ENCODE measurements at regions of chr5 and their contacts with region 1.

Region 1: DNA sequence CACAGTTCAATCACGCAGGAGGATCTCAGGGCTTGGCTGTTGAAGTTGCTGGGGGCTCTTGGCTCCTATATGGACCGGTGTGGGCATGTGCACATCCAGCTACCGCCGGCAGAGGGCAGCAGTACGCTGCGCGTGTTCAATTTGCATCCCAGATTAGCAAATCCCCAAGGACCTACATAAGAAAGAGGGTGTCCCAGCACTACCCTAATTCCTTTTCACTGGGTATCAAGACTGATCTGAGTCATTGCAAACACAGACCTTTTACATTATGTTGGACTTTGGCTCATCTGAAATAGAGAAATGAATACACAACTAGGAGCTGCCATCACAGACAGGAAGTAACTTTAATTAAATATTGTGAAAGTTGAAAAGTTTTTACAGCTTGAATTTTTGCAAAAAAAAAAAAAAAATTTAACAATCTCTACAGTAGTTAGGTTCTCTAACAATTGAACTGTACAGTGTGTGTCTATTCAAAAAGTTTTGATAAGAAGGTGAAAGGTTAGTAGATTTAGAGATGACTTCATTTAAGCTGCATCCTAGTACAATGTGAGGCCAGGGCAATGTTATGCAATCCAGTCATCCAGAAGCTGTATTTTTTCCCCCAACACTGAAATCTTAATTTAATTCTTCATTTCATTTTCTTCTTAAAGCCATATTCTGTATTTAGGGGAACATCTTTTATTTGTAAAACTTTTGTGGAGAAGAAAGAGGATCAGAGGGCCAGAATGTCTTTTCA is 404.0 kb downstream of the EBF1 start:
- DNase-seq: peak; percentile 51 to 66 (median 55)
- H3K4me3 ChIP-seq: no peak overlapping the region
- H3K4me3 Mint-ChIP-seq: peak overlapping the region in 3 of 8 donors; percentile 1 to 20 (median 6)
- H3K27ac ChIP-seq: no peak overlapping the region
- H3K27ac Mint-ChIP-seq: no peak overlapping the region
- H3K4me1 ChIP-seq: no peaks in the 10 kb centered on the region
- H3K4me1 Mint-ChIP-seq: peaks cover 3 to 5% (median 4%) of the 10 kb centered on the region in 4 donors
- H3K27me3 ChIP-seq: no peaks in the 10 kb centered on the region
- H3K27me3 Mint-ChIP-seq: peaks cover 8 to 11% of the 10 kb centered on the region in 2 donors

Region 2: GRCh38 chr5:158174918-158175851 is 520.6 kb before region 1 on chr5:
- CTCF ChIA-PET with region 1: interaction called, 4 read pairs
- POLR2A ChIA-PET with region 1: no interaction called
- intact Hi-C with region 1: loop called (anchors 1 kb)
- DNase-seq: peak in 4 of 5 donors; percentile 13 to 22 (median 18)
- H3K4me3 ChIP-seq: no peak overlapping the region
- H3K4me3 Mint-ChIP-seq: no peak overlapping the region
- H3K27ac ChIP-seq: no peak overlapping the region
- H3K27ac Mint-ChIP-seq: no peak overlapping the region
- H3K4me1 ChIP-seq: no peaks in the 10 kb centered on the region
- H3K4me1 Mint-ChIP-seq: no peaks in the 10 kb centered on the region
- H3K27me3 ChIP-seq: no peaks in the 10 kb centered on the region
- H3K27me3 Mint-ChIP-seq: peaks cover 7 to 12% of the 10 kb centered on the region in 2 donors

Region 3: GRCh38 chr5:158660726-158661125 is 35.0 kb before region 1 on chr5:
- CTCF ChIA-PET with region 1: no interaction called
- POLR2A ChIA-PET with region 1: no interaction called
- intact Hi-C with region 1: no loop called
- DNase-seq: no peak
- H3K4me3 ChIP-seq: no peak overlapping the region
- H3K4me3 Mint-ChIP-seq: no peak overlapping the region
- H3K27ac ChIP-seq: no peak overlapping the region
- H3K27ac Mint-ChIP-seq: no peak overlapping the region
- H3K4me1 ChIP-seq: no peaks in the 10 kb centered on the region
- H3K4me1 Mint-ChIP-seq: no peaks in the 10 kb centered on the region
- H3K27me3 ChIP-seq: no peaks in the 10 kb centered on the region
- H3K27me3 Mint-ChIP-seq: peaks cover 7 to 14% of the 10 kb centered on the region in 2 donors

Region 4: DNA sequence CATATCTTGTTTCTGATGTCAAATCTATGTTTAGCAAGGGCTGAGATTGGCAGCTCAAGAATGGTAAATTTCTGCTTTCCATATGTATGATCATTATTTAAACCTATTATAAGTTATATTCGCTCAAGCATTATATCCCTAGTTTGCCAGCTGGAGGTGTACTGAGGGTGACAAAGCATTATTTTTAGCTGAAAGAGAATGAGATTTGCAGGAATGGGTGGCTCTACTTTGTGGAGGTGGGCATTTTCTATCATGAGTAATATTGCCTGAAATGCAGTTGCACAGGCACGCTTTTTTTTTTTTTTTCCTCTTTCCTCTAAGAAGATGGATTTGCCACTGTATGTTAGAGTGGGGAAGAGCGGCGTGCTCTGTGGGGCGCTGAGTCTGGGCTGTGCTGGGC is 10.1 kb after region 1 on chr5:
- CTCF ChIA-PET with region 1: interaction called, 11 read pairs
- POLR2A ChIA-PET with region 1: no interaction called
- intact Hi-C with region 1: no loop called
- DNase-seq: no peak
- H3K4me3 ChIP-seq: no peak overlapping the region
- H3K4me3 Mint-ChIP-seq: no peak overlapping the region
- H3K27ac ChIP-seq: no peak overlapping the region
- H3K27ac Mint-ChIP-seq: no peak overlapping the region
- H3K4me1 ChIP-seq: no peaks in the 10 kb centered on the region
- H3K4me1 Mint-ChIP-seq: no peaks in the 10 kb centered on the region
- H3K27me3 ChIP-seq: no peaks in the 10 kb centered on the region
- H3K27me3 Mint-ChIP-seq: peaks cover 0 to 3% of the 10 kb centered on the region in 2 donors

Region 5: GRCh38 chr5:158898185-158899177 is 202.7 kb after region 1 on chr5:
- CTCF ChIA-PET with region 1: no interaction called
- POLR2A ChIA-PET with region 1: no interaction called
- intact Hi-C with region 1: no loop called
- DNase-seq: no peak
- H3K4me3 ChIP-seq: no peak overlapping the region
- H3K4me3 Mint-ChIP-seq: no peak overlapping the region
- H3K27ac ChIP-seq: no peak overlapping the region
- H3K27ac Mint-ChIP-seq: no peak overlapping the region
- H3K4me1 ChIP-seq: no peaks in the 10 kb centered on the region
- H3K4me1 Mint-ChIP-seq: no peaks in the 10 kb centered on the region
- H3K27me3 ChIP-seq: no peaks in the 10 kb centered on the region
- H3K27me3 Mint-ChIP-seq: peaks cover 0 to 2% of the 10 kb centered on the region in 2 donors

Region 6: GRCh38 chr5:159128070-159128541 is 432.3 kb after region 1 on chr5:
- CTCF ChIA-PET with region 1: interaction called, 243 read pairs
- POLR2A ChIA-PET with region 1: no interaction called
- intact Hi-C with region 1: no loop called
- DNase-seq: no peak
- H3K4me3 ChIP-seq: no peak overlapping the region
- H3K4me3 Mint-ChIP-seq: no peak overlapping the region
- H3K27ac ChIP-seq: no peak overlapping the region
- H3K27ac Mint-ChIP-seq: peak overlapping the region in 1 of 7 donors; percentile 74
- H3K4me1 ChIP-seq: no peaks in the 10 kb centered on the region
- H3K4me1 Mint-ChIP-seq: peaks cover 0 to 3% (median 0%) of the 10 kb centered on the region in 4 donors
- H3K27me3 ChIP-seq: no peaks in the 10 kb centered on the region
- H3K27me3 Mint-ChIP-seq: peaks cover 6 to 11% of the 10 kb centered on the region in 2 donors